Activated CD4-positive, alpha-beta T cell treated with anti-CD3 and anti-CD28 coated beads for 36 hours (primary cell): ENCODE measurements at regions of chr13 and their contacts with region 1.

Region 1: GRCh38 chr13:100392709-100393641 is 195.6 kb downstream of the GGACT start:
- DNase-seq: peak; percentile 85
- ATAC-seq: peak; percentile 80
- H3K4me3 Mint-ChIP-seq: no peak overlapping the region
- H3K27ac Mint-ChIP-seq: peak overlapping the region; percentile 59
- H3K4me1 Mint-ChIP-seq: peaks cover 31% of the 10 kb centered on the region
- H3K27me3 Mint-ChIP-seq: no peaks in the 10 kb centered on the region

Region 2: GRCh38 chr13:100363874-100364273 is 29.1 kb before region 1 on chr13:
- CTCF ChIA-PET with region 1: no interaction called
- POLR2A ChIA-PET with region 1: no interaction called
- intact Hi-C with region 1: loop called (anchors 1 kb)
- DNase-seq: no peak
- ATAC-seq: no peak
- H3K4me3 Mint-ChIP-seq: no peak overlapping the region
- H3K27ac Mint-ChIP-seq: no peak overlapping the region
- H3K4me1 Mint-ChIP-seq: peaks cover 3% of the 10 kb centered on the region
- H3K27me3 Mint-ChIP-seq: no peaks in the 10 kb centered on the region

Region 3: DNA sequence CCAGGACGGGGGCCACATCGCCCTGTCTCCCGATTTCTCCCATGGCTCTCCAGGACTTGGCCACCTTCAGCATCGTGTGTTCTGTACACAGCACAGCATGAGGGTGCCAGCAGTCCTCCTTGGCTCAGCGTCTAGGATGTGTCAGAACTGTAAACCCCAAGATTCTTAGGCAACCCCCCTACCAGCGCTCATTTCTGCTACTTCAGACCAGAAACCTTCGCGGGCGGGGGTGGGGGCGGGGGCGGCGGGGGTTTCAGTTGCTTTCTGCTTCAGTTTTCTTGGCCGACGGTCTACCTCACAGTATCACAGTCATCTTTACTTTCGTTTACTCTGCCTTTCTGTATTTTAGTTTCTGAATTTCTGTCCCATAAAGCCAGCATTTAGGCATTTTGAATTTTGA is 113.2 kb after region 1 on chr13:
- CTCF ChIA-PET with region 1: no interaction called
- POLR2A ChIA-PET with region 1: no interaction called
- intact Hi-C with region 1: loop called (anchors 1 kb)
- DNase-seq: peak; percentile 63
- ATAC-seq: peak; percentile 91
- H3K4me3 Mint-ChIP-seq: peak overlapping the region; percentile 52
- H3K27ac Mint-ChIP-seq: peak overlapping the region; percentile 49
- H3K4me1 Mint-ChIP-seq: peaks cover 20% of the 10 kb centered on the region
- H3K27me3 Mint-ChIP-seq: peaks cover 15% of the 10 kb centered on the region

Region 4: GRCh38 chr13:100619940-100620339 is 227.0 kb after region 1 on chr13:
- CTCF ChIA-PET with region 1: no interaction called
- POLR2A ChIA-PET with region 1: no interaction called
- intact Hi-C with region 1: no loop called
- DNase-seq: peak; percentile 10
- ATAC-seq: peak; percentile 78
- H3K4me3 Mint-ChIP-seq: no peak overlapping the region
- H3K27ac Mint-ChIP-seq: no peak overlapping the region
- H3K4me1 Mint-ChIP-seq: peaks cover 9% of the 10 kb centered on the region
- H3K27me3 Mint-ChIP-seq: no peaks in the 10 kb centered on the region